Pancreas (tissue), 10 donors: ENCODE measurements at regions of chr10 and their contacts with region 1.

Region 1: DNA sequence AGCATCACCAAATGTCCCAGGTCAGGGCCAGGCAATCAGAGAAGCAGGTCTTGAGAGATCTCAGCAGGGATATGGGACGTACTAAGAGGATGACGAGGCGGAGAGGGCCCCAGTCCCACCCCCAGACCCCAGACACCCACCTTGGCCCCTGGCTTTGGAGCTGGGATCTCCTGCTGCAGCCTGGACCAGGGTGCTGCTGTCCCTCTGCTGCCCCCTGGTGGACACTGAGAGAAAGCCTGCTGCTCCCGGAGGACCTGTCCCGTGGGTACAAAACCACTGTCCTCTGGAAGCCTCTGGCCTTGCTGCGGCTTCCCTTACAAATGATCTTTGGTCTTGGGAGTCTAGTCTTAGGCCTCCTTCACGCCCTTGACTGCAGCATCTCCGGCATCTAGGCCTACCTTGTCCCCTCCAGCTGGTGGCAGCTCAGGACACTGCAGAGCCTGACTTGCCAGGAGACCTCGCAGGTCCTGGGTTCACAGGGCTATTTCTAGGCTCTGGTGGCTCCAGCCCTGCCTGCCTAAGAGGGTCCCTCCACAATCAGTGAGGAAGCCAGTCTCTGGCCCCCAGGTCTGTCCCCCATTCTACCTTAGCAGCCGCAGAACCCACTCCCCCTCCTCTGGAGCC is 97.1 kb downstream of the RGS10 start:
- DNase-seq: peak; percentile 65 to 94 (median 84)
- ATAC-seq: peak; percentile 83 to 95 (median 88)
- H3K4me3 ChIP-seq: no peak overlapping the region
- H3K27ac ChIP-seq: no peak overlapping the region
- H3K4me1 ChIP-seq: no peaks in the 10 kb centered on the region
- H3K27me3 ChIP-seq: no peaks in the 10 kb centered on the region
- CTCF ChIP-seq: peak; percentile 93 to 97 (median 94)

Region 2: DNA sequence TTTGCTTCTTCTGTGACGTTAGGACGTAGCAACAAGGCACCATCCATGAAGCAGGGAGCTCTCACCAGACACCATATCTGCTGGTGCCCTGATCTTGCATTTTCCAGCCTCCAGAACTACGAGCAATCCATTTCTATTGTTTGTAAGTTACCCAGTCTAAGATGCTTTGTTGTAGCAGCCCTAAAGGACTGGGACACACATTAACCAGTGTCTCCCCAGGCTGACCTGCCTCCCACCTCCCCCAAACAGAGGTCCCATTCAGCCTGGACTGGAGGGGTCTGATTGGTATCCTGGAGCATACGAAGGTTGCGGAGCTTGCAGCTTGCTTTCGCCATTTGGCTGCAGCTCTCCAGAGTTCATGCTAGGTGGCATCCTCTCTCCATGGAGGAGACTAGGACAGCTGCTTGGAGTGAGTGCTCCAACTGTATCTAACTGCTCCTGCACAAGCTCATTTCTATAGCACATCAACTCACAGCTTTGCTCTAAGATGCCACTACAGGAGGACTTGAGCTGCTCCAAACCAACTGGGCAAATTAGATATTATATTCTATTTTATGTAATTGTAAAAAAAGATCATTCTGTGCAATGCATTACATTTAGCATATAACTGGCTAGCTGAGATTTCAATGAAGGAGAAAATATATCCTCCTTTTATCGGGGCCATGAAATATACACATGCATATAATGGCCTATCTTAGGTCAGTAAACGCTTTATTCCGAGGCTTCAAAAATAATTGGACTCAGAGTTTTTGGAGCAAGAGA is 246.0 kb before region 1 on chr10:
- intact Hi-C with region 1: loop called in 2 of 3 experiments (anchors 5 kb)
- DNase-seq: peak in 5 of 6 donors; percentile 55 to 72 (median 59)
- ATAC-seq: peak; percentile 87 to 99 (median 98)
- H3K4me3 ChIP-seq: no peak overlapping the region
- H3K27ac ChIP-seq: no peak overlapping the region
- H3K4me1 ChIP-seq: no peaks in the 10 kb centered on the region
- H3K27me3 ChIP-seq: no peaks in the 10 kb centered on the region
- CTCF ChIP-seq: peak in 3 of 4 donors; percentile 54 to 61 (median 55)